ENCODE measurements at regions of chr2 and their contacts with region 1.

Region 1: GRCh38 chr2:224436634-224437033 is 34.7 kb upstream of the FAM124B start:
- DNase-seq: no peak
- ATAC-seq: no peak
- H3K4me3 ChIP-seq: no peak overlapping the region
- H3K4me3 Mint-ChIP-seq: no peak overlapping the region
- H3K27ac ChIP-seq: no peak overlapping the region
- H3K27ac Mint-ChIP-seq: no peak overlapping the region
- H3K4me1 ChIP-seq: no peaks in the 10 kb centered on the region
- H3K4me1 Mint-ChIP-seq: peaks cover under 1 to 5% (median 2%) of the 10 kb centered on the region in 3 donors
- H3K27me3 ChIP-seq: peaks cover 0 to 17% of the 10 kb centered on the region in 2 experiments
- H3K27me3 Mint-ChIP-seq: peaks cover 27 to 40% of the 10 kb centered on the region in 2 donors

Region 2: DNA sequence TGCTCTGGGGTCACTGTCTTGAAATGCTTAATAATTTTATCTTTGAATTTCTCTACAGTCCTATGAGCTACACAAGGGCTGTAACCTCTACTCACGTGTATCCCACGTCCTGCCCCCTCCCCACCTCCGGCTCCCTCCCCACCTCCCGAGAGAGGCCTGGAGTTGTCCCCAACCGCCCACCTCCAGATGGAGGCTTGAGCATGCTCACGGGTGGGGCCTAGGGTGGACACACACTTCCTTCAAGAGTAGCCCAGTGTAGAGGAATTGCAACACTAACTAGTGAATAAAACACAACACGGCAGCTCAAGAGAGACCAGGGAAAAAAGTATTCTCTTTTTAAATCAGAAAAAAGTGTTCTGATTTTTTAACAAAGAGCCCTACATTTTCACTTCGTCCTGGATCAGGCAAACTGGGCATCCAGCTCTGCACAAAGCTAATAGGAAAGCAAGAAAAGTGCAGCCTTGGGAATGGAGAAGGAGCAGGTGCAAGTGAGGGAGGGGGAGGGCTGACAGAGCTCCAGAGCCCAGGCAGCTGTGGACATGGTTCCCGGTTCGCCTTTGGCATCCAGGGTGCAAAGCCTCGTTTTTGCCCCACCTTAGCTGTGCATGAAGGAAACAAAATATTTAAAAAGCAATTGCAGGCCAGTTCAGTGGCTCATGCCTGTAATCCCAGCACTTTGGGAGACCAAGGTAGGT is 117.0 kb before region 1 on chr2:
- CTCF ChIA-PET with region 1: no interaction called
- POLR2A ChIA-PET with region 1: no interaction called
- DNase-seq: no peak
- ATAC-seq: no peak
- H3K4me3 ChIP-seq: no peak overlapping the region
- H3K4me3 Mint-ChIP-seq: no peak overlapping the region
- H3K27ac ChIP-seq: no peak overlapping the region
- H3K27ac Mint-ChIP-seq: no peak overlapping the region
- H3K4me1 ChIP-seq: no peaks in the 10 kb centered on the region
- H3K4me1 Mint-ChIP-seq: no peaks in the 10 kb centered on the region
- H3K27me3 ChIP-seq: peaks cover 0 to 12% of the 10 kb centered on the region in 2 experiments
- H3K27me3 Mint-ChIP-seq: peaks cover 27 to 28% of the 10 kb centered on the region in 2 donors

Region 3: GRCh38 chr2:224576088-224576715 is 139.6 kb after region 1 on chr2:
- CTCF ChIA-PET with region 1: no interaction called
- POLR2A ChIA-PET with region 1: interaction called in 1 of 2 experiments, 23 read pairs
- DNase-seq: peak in 1 of 35 experiments; percentile 20
- ATAC-seq: peak; percentile 28 to 55 (median 42)
- H3K4me3 ChIP-seq: no peak overlapping the region
- H3K4me3 Mint-ChIP-seq: peak overlapping the region; percentile 25 to 68 (median 66)
- H3K27ac ChIP-seq: no peak overlapping the region
- H3K27ac Mint-ChIP-seq: peak overlapping the region; percentile 19 to 62
- H3K4me1 ChIP-seq: peaks cover 30 to 73% of the 10 kb centered on the region in 2 experiments
- H3K4me1 Mint-ChIP-seq: peaks cover 85 to 95% (median 94%) of the 10 kb centered on the region in 3 donors
- H3K27me3 ChIP-seq: no peaks in the 10 kb centered on the region
- H3K27me3 Mint-ChIP-seq: no peaks in the 10 kb centered on the region

Measured in T-cell (primary cell).